ENCODE measurements at regions of chr7 and their contacts with region 1.

Region 1: DNA sequence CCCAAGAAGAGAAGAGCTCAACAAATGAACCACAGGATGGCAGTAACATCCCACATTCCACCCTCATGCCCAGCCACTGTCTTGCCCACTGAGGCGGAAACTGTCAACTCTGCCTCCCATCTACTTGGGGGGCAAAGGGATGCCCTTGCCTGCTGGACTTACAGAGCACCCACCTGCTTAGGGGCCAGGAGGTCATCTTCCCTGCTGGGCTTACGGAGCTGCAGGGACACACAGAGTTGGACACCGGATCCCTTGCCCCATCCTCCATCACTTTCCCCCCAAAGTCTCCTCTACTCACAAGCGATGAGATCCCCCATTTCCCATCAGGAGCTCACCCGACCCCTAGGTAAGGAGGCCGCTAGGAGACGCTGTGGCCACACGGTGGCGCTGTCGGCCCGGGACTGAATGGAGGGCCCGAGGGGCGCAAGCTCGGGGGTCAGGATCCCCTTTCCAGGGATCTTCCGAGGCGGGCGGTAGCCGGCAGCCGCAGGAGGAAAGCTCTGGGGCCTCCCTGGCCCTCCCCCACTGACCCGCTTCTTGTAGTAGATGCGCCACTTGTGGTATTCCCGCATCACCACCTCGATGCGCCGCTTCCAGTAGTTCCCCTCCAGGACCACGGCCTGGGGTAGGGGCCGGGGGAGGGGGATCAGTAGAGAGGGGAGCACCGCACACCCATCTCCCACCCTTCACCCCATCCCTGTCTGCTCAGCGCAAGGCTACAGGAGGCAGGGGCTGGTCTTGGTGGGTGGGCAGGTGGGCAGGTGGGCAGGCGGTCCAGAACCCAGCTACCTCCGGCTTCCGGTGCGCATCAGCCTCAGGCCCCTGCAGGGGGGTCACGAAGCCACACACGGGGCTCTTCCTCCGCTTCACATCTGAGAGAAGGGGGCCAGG is 17.3 kb downstream of the MLXIPL start:
- DNase-seq: peak; percentile 78 to 89 (median 88)
- ATAC-seq: peak; percentile 85
- H3K4me3 ChIP-seq: no peak overlapping the region
- H3K27ac ChIP-seq: no peak overlapping the region
- H3K4me1 ChIP-seq: peaks cover 0 to 30% of the 10 kb centered on the region in 2 experiments; a peak in 2 of 5 replicates
- H3K27me3 ChIP-seq: no peaks in the 10 kb centered on the region
- CTCF ChIP-seq: peak; percentile 93 to 98 (median 97)
- EP300 ChIP-seq: no peak
- POLR2A ChIP-seq: no peak
- RAD21 ChIP-seq: peak; percentile 86 to 95

Region 2: GRCh38 chr7:73585196-73585595 is 21.9 kb before region 1 on chr7:
- CTCF ChIA-PET with region 1: no interaction called
- POLR2A ChIA-PET with region 1: interaction called, 10 read pairs
- in situ Hi-C with region 1: no loop called
- intact Hi-C with region 1: no loop called
- DNase-seq: no peak
- ATAC-seq: no peak
- H3K4me3 ChIP-seq: no peak overlapping the region
- H3K27ac ChIP-seq: no peak overlapping the region
- H3K4me1 ChIP-seq: peaks cover 16 to 19% of the 10 kb centered on the region in 2 experiments
- H3K27me3 ChIP-seq: no peaks in the 10 kb centered on the region
- CTCF ChIP-seq: no peak
- EP300 ChIP-seq: no peak
- POLR2A ChIP-seq: no peak
- RAD21 ChIP-seq: no peak

Region 3: GRCh38 chr7:73667344-73668102 is 60.5 kb after region 1 on chr7 and contains the start of gene VPS37D:
- CTCF ChIA-PET with region 1: interaction called, 24 read pairs
- POLR2A ChIA-PET with region 1: interaction called, 3 read pairs
- in situ Hi-C with region 1: no loop called
- intact Hi-C with region 1: loop called (anchors 2 kb)
- DNase-seq: peak; percentile 97 to 99 (median 99)
- ATAC-seq: peak; percentile 96
- H3K4me3 ChIP-seq: peak within 1 kb of the TSS; percentile 53
- H3K27ac ChIP-seq: no peak within 1 kb of the TSS
- H3K4me1 ChIP-seq: peaks cover 9 to 42% of the 10 kb centered on the region in 2 experiments
- H3K27me3 ChIP-seq: no peaks in the 10 kb centered on the region
- CTCF ChIP-seq: peak; percentile 48 to 96 (median 91)
- EP300 ChIP-seq: no peak
- POLR2A ChIP-seq: no peak
- RAD21 ChIP-seq: peak; percentile 86 to 88
- polyA plus RNA-seq, gene VPS37D: not detected

Region 4: GRCh38 chr7:73726083-73726466 is 119.0 kb after region 1 on chr7:
- CTCF ChIA-PET with region 1: interaction called, 10 read pairs
- POLR2A ChIA-PET with region 1: interaction called, 3 read pairs
- in situ Hi-C with region 1: loop called (anchors 5 kb)
- intact Hi-C with region 1: loop called (anchors 1 kb)
- DNase-seq: no peak
- ATAC-seq: peak; percentile 60
- H3K4me3 ChIP-seq: no peak overlapping the region
- H3K27ac ChIP-seq: no peak overlapping the region
- H3K4me1 ChIP-seq: peaks cover 10 to 13% of the 10 kb centered on the region in 2 experiments; a peak in 4 of 5 replicates
- H3K27me3 ChIP-seq: no peaks in the 10 kb centered on the region
- CTCF ChIP-seq: no peak; a peak in 1 of 6 replicates
- EP300 ChIP-seq: no peak
- POLR2A ChIP-seq: no peak
- RAD21 ChIP-seq: no peak

Measured in K562 (cell line).